AG04450 (cell line): ENCODE measurements at regions of chr3 and their contacts with region 1.

Region 1: DNA sequence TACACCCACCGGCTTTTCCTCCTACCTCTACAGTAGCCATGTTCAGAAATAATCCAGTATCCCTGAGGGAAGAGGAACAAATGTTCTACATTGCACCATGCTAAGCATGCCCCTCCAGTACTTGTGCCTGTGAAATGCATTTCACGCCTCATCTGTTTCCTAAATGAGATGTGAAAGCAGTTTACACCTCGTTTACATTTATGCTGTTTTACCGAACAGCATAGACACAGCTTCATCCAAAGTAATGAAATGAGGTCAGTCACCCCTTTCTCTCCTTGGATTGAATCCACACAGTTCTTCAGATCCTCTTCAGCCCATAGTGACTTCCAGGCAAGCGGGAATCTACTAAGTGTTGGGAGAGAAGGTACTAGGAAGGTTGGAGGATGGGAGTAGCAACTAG is 514.3 kb downstream of the PDCD6IP start:
- DNase-seq: no peak
- H3K4me3 ChIP-seq: no peak overlapping the region
- H3K27ac ChIP-seq: no peak overlapping the region
- H3K27me3 ChIP-seq: no peaks in the 10 kb centered on the region
- CTCF ChIP-seq: no peak

Region 2: GRCh38 chr3:34015204-34016142 is 297.2 kb before region 1 on chr3:
- CTCF ChIA-PET with region 1: no interaction called
- POLR2A ChIA-PET with region 1: no interaction called
- DNase-seq: no peak
- H3K4me3 ChIP-seq: no peak overlapping the region
- H3K27ac ChIP-seq: no peak overlapping the region
- H3K27me3 ChIP-seq: no peaks in the 10 kb centered on the region
- CTCF ChIP-seq: peak; percentile 56

Region 3: DNA sequence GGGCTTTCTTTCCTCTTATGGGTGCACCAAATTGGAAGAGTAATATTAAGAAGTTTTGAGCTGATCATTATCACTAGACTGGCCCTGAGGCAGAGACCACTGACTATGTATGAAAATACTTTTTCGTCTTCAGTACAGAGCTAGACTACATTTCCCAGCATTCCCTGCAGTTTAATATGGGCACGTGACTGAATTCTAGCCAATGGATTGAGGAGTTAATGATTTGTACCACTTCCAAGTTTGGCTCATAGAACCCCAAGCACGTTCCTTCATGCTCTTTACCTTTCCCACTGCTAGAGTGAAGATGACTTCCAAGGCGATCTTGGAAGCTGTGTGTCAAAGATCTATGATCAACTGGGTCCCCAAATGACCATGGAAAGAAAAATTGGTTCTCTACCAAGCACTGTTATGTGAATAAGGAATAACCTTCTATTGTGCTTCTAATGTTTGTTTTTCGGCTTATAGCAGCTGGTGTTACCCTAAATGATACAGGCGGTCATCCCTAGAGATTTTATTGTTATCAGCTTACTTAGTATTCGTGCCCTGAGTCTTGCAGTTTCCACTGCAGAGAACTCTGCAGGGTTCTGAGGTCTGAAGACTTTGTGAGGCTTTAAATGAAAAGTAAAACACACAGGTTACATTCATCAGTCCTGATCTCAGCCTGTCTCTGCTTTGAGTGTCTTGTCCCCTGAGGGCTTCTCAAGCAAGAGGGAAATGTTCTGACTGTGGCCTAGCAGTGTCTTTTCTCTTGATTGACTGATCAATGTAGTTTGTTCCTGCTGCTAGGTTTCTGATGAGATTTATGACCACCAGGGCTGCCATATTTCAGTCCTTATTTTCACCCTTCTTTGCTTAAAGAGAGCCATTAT is 27.5 kb before region 1 on chr3:
- CTCF ChIA-PET with region 1: interaction called, 12 read pairs
- POLR2A ChIA-PET with region 1: no interaction called
- DNase-seq: no peak
- H3K4me3 ChIP-seq: no peak overlapping the region
- H3K27ac ChIP-seq: no peak overlapping the region
- H3K27me3 ChIP-seq: no peaks in the 10 kb centered on the region
- CTCF ChIP-seq: no peak

Region 4: DNA sequence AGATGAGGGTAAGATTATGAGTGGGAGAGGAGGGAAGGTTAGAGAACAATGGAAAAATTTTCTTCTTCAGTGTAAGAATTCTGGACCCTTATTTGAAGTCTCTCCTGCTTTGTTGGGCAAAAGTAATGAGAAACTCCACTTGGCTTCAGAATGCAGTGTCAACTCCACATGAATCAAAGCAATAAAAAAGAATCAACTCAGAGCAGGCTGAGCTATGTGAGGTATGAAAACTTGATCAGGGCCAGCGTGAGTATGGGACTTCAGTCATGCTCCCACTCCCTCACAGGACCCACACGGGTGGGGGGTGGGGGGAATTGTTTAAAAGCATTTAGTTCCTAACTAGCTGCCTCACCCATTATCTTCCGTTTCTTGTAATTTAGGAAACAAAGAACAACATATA is 12.1 kb before region 1 on chr3:
- CTCF ChIA-PET with region 1: no interaction called
- POLR2A ChIA-PET with region 1: no interaction called
- DNase-seq: no peak
- H3K4me3 ChIP-seq: no peak overlapping the region
- H3K27ac ChIP-seq: no peak overlapping the region
- H3K27me3 ChIP-seq: no peaks in the 10 kb centered on the region
- CTCF ChIP-seq: no peak